PC-9 (cell line): ENCODE measurements at regions of chr12 and their contacts with region 1.

Region 1: DNA sequence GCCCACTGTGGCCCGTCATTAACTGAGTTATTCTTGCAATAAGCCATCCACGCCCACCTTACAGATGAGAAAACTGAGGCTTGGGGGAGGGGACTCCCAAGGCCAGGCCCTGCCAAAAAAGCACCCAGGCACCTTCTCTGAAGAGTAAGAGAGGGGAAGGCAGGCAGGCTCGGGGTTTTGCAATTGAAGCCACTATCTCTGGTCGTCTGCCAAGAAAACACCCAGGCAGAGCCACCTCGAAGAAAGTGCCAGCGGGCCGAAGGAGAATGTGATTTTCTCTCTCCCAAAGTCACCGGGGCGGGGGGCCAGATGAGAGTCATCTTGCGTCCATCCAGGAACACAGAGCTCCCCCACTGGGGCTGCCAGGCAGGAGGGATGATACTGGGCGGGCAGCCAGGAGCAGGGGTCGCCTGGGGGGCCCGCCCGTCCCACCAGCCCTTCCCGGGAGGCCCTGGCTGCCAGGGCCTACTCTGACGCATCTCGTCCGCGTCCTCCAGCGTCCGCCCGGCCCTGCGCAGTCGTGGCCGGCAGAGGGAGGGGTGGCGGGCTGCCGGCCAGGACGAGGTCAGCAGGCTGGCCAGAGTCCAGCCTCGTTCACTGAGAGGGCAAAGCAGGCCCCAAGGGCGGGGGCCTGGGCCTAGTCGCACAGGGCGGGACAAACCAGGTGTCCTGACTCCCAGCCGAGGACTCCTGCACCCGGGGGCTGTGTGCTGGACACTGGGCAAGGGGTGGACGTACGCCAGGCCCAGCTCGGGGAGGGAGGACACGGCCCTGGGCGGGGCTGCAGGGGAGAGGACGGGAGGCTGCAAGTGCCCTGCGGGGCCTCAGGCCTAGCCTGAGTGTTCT is 74.4 kb downstream of the RFLNA start:
- DNase-seq: peak; percentile 92 to 100
- H3K4me3 ChIP-seq: peak overlapping the region; percentile 35; the same call in 1 of the 2 replicates
- H3K27ac ChIP-seq: peak overlapping the region; percentile 69
- H3K4me1 ChIP-seq: peaks cover 48% of the 10 kb centered on the region
- H3K27me3 ChIP-seq: no peaks in the 10 kb centered on the region
- CTCF ChIP-seq: 0 out of 2 replicates have a peak, but pooled peaks have one; percentile 32

Region 2: DNA sequence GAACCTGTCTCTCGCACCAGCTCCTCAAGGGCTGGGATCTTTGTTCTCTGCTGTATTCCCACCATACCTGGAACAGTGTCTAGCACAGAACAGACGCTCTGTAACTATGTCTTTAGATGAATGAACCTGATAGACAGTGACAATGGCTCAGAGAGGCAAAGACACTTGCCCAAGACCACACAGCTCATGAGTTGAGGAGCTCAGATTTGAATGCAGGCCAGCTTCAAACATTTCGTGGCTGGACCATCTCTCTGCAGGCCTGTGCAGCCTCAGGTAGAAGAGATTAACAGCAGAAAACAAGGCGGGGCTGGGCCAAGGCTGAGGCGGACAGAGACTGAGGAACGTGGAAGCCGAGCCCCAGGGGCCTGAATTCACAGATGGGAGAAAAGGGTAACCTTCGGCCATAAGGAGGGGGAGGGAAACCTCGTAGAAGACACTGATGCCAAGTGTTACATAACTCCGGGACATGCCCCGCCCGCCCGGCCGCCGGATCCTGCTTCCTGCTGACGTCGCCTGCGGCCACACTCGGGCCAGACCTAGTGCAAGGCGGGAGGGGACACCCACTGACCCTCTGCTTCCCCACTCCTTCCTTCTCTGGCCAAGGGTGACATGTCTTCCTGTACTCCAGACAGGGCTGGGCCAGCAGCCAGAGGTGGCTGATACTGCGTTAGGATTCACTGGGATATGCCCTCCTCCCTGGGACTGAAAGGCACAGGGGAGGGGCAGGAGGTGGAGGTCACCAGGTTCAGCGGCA is 12.4 kb after region 1 on chr12:
- CTCF ChIA-PET with region 1: interaction called, 3 read pairs
- POLR2A ChIA-PET with region 1: interaction called, 11 read pairs
- intact Hi-C with region 1: loop called (anchors 1 kb)
- DNase-seq: peak; percentile 95 to 99
- H3K4me3 ChIP-seq: no peak overlapping the region
- H3K27ac ChIP-seq: peak overlapping the region; percentile 53
- H3K4me1 ChIP-seq: peaks cover 52% of the 10 kb centered on the region
- H3K27me3 ChIP-seq: no peaks in the 10 kb centered on the region
- CTCF ChIP-seq: no peak

Region 3: GRCh38 chr12:124422570-124423523 is 53.6 kb after region 1 on chr12:
- CTCF ChIA-PET with region 1: no interaction called
- POLR2A ChIA-PET with region 1: no interaction called
- intact Hi-C with region 1: loop called (anchors 1 kb)
- DNase-seq: peak; percentile 84 to 96
- H3K4me3 ChIP-seq: peak overlapping the region; percentile 49; the same call in 1 of the 2 replicates
- H3K27ac ChIP-seq: peak overlapping the region; percentile 91
- H3K4me1 ChIP-seq: peaks cover 32% of the 10 kb centered on the region
- H3K27me3 ChIP-seq: no peaks in the 10 kb centered on the region
- CTCF ChIP-seq: no peak

Region 4: GRCh38 chr12:124441443-124442194 is 72.3 kb after region 1 on chr12:
- CTCF ChIA-PET with region 1: no interaction called
- POLR2A ChIA-PET with region 1: interaction called, 6 read pairs
- intact Hi-C with region 1: loop called (anchors 1 kb)
- DNase-seq: peak; percentile 82 to 89
- H3K4me3 ChIP-seq: peak overlapping the region; percentile 52
- H3K27ac ChIP-seq: peak overlapping the region; percentile 97
- H3K4me1 ChIP-seq: peaks cover 33% of the 10 kb centered on the region
- H3K27me3 ChIP-seq: no peaks in the 10 kb centered on the region
- CTCF ChIP-seq: no peak

Region 5: DNA sequence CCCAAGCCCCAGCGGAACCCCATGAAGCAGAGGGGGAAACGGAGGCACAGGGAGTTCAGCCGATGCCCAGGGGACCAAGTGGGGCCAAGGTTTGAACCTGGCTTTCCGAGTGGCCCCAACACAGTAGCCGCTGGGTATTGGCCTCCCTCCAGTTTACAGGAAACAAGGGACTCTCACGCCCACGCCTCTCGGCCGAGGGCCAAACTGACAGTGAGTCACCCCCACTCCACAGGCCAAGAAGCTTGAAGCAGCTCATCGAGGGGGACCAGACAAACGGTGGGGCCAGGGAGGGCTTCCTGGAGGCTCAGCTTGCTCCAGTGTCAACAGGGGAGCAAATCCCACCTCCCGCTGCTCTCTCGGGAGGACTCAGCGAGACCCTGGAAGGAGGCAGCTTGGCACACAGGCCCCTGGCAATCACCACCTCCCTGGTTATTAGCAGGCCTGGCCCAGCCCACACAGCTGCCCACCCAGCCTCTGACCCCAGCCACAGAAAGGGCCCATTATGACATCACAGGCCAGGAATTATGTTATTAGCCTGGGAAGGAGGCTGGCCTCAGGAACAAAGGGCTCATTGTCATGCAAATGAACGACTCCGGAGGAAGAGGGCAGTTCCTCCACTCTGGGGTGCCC is 143.5 kb after region 1 on chr12:
- CTCF ChIA-PET with region 1: no interaction called
- POLR2A ChIA-PET with region 1: no interaction called
- intact Hi-C with region 1: loop called (anchors 5 kb)
- DNase-seq: peak; percentile 89 to 92
- H3K4me3 ChIP-seq: peak overlapping the region; percentile 39; the same call in 1 of the 2 replicates
- H3K27ac ChIP-seq: peak overlapping the region; percentile 77
- H3K4me1 ChIP-seq: peaks cover 79% of the 10 kb centered on the region
- H3K27me3 ChIP-seq: no peaks in the 10 kb centered on the region
- CTCF ChIP-seq: no peak

Region 6: DNA sequence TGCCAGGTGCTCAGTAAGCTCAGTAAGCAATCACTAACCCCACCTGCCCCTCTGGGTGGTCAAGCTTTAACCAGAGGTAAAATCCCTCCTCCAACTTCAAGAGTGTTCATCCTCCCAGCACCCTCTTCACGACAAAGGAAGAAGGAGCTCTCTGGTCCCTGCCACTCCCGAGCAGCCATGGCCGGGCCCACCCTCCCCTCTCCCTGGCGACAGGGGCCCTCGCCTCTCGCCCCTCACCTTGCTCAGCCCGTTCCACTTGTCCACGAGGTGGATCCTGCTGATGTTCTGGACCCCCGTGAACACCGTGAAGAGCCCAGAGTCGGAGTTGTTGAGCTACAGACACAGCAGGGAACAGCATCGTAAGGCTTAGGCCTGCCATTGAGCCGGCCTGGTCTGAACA is 442.4 kb after region 1 on chr12:
- CTCF ChIA-PET with region 1: no interaction called
- POLR2A ChIA-PET with region 1: interaction called, 33 read pairs
- intact Hi-C with region 1: no loop called
- DNase-seq: no peak
- H3K4me3 ChIP-seq: no peak overlapping the region
- H3K27ac ChIP-seq: no peak overlapping the region
- H3K4me1 ChIP-seq: no peaks in the 10 kb centered on the region
- H3K27me3 ChIP-seq: no peaks in the 10 kb centered on the region
- CTCF ChIP-seq: no peak